CD8-positive, alpha-beta T cell (primary cell): ENCODE measurements at regions of chr5 and their contacts with region 1.

Region 1: GRCh38 chr5:113606298-113607134 is 93.0 kb downstream of the YTHDC2 start:
- DNase-seq: peak in 8 of 9 experiments; percentile 10 to 73 (median 42)
- ATAC-seq: peak; percentile 74
- H3K4me3 ChIP-seq: no peak overlapping the region
- H3K4me3 Mint-ChIP-seq: no peak overlapping the region
- H3K27ac ChIP-seq: no peak overlapping the region
- H3K27ac Mint-ChIP-seq: no peak overlapping the region
- H3K4me1 ChIP-seq: no peaks in the 10 kb centered on the region
- H3K4me1 Mint-ChIP-seq: peaks cover 4% of the 10 kb centered on the region
- H3K27me3 ChIP-seq: peaks cover 0 to 5% of the 10 kb centered on the region in 2 experiments
- H3K27me3 Mint-ChIP-seq: peaks cover 22% of the 10 kb centered on the region
- CTCF ChIP-seq: peak; percentile 75

Region 2: GRCh38 chr5:112174959-112175594 is 1431.4 kb before region 1 on chr5:
- CTCF ChIA-PET with region 1: no interaction called
- POLR2A ChIA-PET with region 1: no interaction called
- intact Hi-C with region 1: loop called (anchors 5 to 10 kb)
- DNase-seq: peak in 5 of 9 experiments; percentile 4 to 65 (median 28)
- ATAC-seq: peak; percentile 56
- H3K4me3 ChIP-seq: no peak overlapping the region
- H3K4me3 Mint-ChIP-seq: no peak overlapping the region
- H3K27ac ChIP-seq: no peak overlapping the region
- H3K27ac Mint-ChIP-seq: no peak overlapping the region
- H3K4me1 ChIP-seq: no peaks in the 10 kb centered on the region
- H3K4me1 Mint-ChIP-seq: peaks cover 4% of the 10 kb centered on the region
- H3K27me3 ChIP-seq: no peaks in the 10 kb centered on the region
- H3K27me3 Mint-ChIP-seq: peaks cover 13% of the 10 kb centered on the region
- CTCF ChIP-seq: peak; percentile 62

Region 3: DNA sequence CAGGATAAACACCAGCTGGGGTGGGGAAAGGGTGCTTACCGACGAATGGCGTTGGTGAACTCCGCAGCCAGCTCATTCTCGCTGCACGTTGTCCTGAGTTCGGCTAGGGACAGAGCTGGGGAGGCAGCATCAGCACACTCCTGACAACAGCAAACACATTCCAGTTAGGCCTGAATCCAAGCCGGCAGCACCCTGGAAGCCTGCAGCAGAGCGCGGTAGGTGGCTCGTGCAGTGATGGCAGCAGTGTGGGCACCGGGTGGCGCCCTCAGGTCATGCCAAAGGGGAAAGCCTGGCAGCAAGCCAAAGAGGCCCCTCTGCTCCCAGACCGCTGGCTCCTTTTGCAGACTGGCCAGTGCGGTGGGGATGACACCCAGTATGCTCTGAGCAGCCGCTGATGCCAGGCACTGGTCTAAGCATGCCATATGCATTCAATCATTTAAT is 563.0 kb before region 1 on chr5:
- CTCF ChIA-PET with region 1: no interaction called
- POLR2A ChIA-PET with region 1: no interaction called
- intact Hi-C with region 1: loop called in 1 of 2 experiments (anchors 5 kb)
- DNase-seq: peak in 6 of 9 experiments; percentile 16 to 71 (median 40)
- ATAC-seq: no peak
- H3K4me3 ChIP-seq: no peak overlapping the region
- H3K4me3 Mint-ChIP-seq: no peak overlapping the region
- H3K27ac ChIP-seq: no peak overlapping the region
- H3K27ac Mint-ChIP-seq: no peak overlapping the region
- H3K4me1 ChIP-seq: no peaks in the 10 kb centered on the region
- H3K4me1 Mint-ChIP-seq: peaks cover 5% of the 10 kb centered on the region
- H3K27me3 ChIP-seq: no peaks in the 10 kb centered on the region
- H3K27me3 Mint-ChIP-seq: no peaks in the 10 kb centered on the region
- CTCF ChIP-seq: peak; percentile 24

Region 4: GRCh38 chr5:113336975-113337374 is 269.5 kb before region 1 on chr5:
- CTCF ChIA-PET with region 1: interaction called, 25 read pairs
- POLR2A ChIA-PET with region 1: no interaction called
- intact Hi-C with region 1: loop called (anchors 1 kb)
- DNase-seq: peak in 2 of 9 experiments; percentile 15 to 21
- ATAC-seq: no peak
- H3K4me3 ChIP-seq: no peak overlapping the region
- H3K4me3 Mint-ChIP-seq: no peak overlapping the region
- H3K27ac ChIP-seq: no peak overlapping the region
- H3K27ac Mint-ChIP-seq: no peak overlapping the region
- H3K4me1 ChIP-seq: peaks cover 4% of the 10 kb centered on the region
- H3K4me1 Mint-ChIP-seq: peaks cover 8% of the 10 kb centered on the region
- H3K27me3 ChIP-seq: peaks cover 0 to 3% of the 10 kb centered on the region in 2 experiments
- H3K27me3 Mint-ChIP-seq: peaks cover 12% of the 10 kb centered on the region
- CTCF ChIP-seq: no peak

Region 5: DNA sequence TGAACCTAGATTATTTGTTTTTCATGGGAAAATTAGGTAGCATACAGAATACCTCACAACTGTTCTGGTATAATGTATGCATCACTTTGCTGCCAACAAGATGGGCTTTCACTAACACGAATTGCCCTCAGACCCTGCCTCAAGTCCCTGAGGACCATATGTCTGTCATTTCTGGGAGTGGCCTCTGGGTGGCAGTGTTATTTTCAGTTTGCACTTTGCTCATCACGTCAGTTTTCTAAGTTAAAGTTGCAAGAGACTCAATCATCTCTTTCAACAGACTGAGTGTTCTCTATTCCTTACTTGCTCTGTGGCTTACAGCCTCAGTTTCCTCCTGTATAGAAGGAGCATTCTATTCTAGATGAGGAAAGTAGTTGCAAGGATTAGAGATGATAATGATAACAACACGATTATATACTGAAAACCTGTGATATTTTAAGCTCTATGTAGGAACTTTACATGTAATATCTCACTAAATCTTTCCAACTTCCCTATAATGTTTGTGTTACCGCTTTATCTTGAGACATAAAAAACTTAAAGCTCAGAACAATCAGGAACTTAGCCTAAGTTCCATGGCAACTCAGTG is 227.5 kb before region 1 on chr5:
- CTCF ChIA-PET with region 1: interaction called, 19 read pairs
- POLR2A ChIA-PET with region 1: no interaction called
- intact Hi-C with region 1: loop called (anchors 1 to 5 kb)
- DNase-seq: peak; percentile 7 to 72 (median 52)
- ATAC-seq: peak; percentile 64
- H3K4me3 ChIP-seq: no peak overlapping the region
- H3K4me3 Mint-ChIP-seq: peak overlapping the region; percentile 27
- H3K27ac ChIP-seq: no peak overlapping the region
- H3K27ac Mint-ChIP-seq: no peak overlapping the region
- H3K4me1 ChIP-seq: peaks cover 29% of the 10 kb centered on the region
- H3K4me1 Mint-ChIP-seq: peaks cover 46% of the 10 kb centered on the region
- H3K27me3 ChIP-seq: no peaks in the 10 kb centered on the region
- H3K27me3 Mint-ChIP-seq: peaks cover 16% of the 10 kb centered on the region
- CTCF ChIP-seq: peak; percentile 76